ENCODE measurements at regions of chr7 and their contacts with region 1.

Region 1: GRCh38 chr7:105678811-105679495 is 97.7 kb upstream of the EFCAB10 start:
- H3K4me3 Mint-ChIP-seq: peak overlapping the region; percentile 84
- H3K27ac Mint-ChIP-seq: peak overlapping the region; percentile 93
- H3K4me1 Mint-ChIP-seq: peaks cover 88% of the 10 kb centered on the region
- H3K27me3 Mint-ChIP-seq: no peaks in the 10 kb centered on the region

Region 2: GRCh38 chr7:105268511-105269392 is 410.2 kb before region 1 on chr7:
- intact Hi-C with region 1: no loop called
- H3K4me3 Mint-ChIP-seq: peak overlapping the region; percentile 76
- H3K27ac Mint-ChIP-seq: peak overlapping the region; percentile 79
- H3K4me1 Mint-ChIP-seq: peaks cover 21% of the 10 kb centered on the region
- H3K27me3 Mint-ChIP-seq: no peaks in the 10 kb centered on the region

Region 3: DNA sequence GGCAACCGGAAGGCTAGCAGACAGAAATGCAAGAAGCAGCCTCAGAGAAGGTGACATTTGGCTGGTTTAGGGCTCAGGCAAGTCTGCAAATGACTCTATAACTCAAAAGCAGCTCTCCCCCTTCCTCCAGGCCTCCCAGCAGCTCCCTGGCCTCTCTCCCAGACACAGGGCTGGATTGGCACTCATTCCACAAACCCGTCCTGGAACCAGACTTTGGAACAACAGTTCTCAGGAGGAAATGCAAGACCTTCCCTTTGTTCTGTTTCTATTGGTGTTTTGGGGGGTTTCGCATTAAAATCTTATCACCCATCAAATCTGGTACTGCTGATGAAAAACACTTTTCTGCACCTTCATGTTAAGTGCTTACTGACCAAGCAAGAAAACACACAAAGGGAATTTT is 57.3 kb before region 1 on chr7:
- intact Hi-C with region 1: no loop called
- H3K4me3 Mint-ChIP-seq: no peak overlapping the region
- H3K27ac Mint-ChIP-seq: no peak overlapping the region
- H3K4me1 Mint-ChIP-seq: no peaks in the 10 kb centered on the region
- H3K27me3 Mint-ChIP-seq: no peaks in the 10 kb centered on the region

Region 4: DNA sequence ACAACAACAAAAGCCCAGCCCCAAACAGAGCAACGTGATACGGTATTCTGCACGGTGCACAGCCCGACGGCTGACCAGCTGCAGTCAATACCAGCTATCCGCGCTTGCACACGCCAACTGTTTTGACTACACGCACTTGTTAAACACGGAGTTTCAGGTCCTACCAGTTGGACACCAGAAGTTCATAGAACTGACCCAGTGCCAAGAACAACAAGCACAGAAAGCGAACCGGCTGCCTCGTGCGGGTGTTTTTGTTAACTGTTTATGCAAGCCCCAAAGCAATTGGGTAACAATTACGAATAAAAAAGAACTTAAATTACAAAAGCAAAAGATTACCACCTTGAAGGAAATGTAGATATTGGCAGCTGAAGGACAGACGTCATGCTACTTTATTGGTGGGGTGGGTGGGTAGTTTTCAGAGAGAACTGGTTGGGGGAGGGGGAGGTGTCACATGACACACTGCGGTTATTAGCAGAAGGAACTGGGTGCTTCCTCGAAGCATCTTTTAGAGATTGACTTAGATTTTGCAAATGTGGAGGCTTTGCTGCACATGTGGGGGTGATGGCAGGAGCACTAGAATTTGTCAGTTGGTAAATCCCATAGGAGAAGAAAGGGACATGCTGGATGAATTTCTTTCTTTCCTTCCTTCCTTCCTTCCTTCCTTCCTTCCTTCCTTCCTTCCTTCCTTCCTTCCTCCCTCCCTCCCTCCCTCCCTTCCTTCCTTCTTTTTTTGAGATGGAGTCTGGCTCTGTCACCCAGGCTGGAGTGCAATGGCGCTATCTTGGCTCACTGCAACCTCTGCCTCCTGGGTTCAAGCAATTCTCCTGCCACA is 13.0 kb after region 1 on chr7:
- intact Hi-C with region 1: loop called (anchors 1 kb)
- H3K4me3 Mint-ChIP-seq: peak overlapping the region; percentile 87
- H3K27ac Mint-ChIP-seq: peak overlapping the region; percentile 92
- H3K4me1 Mint-ChIP-seq: peaks cover 42% of the 10 kb centered on the region
- H3K27me3 Mint-ChIP-seq: no peaks in the 10 kb centered on the region

Region 5: GRCh38 chr7:105743351-105744090 is 64.6 kb after region 1 on chr7:
- intact Hi-C with region 1: loop called (anchors 2 kb)
- H3K4me3 Mint-ChIP-seq: no peak overlapping the region
- H3K27ac Mint-ChIP-seq: peak overlapping the region; percentile 69
- H3K4me1 Mint-ChIP-seq: peaks cover 24% of the 10 kb centered on the region
- H3K27me3 Mint-ChIP-seq: no peaks in the 10 kb centered on the region

Region 6: DNA sequence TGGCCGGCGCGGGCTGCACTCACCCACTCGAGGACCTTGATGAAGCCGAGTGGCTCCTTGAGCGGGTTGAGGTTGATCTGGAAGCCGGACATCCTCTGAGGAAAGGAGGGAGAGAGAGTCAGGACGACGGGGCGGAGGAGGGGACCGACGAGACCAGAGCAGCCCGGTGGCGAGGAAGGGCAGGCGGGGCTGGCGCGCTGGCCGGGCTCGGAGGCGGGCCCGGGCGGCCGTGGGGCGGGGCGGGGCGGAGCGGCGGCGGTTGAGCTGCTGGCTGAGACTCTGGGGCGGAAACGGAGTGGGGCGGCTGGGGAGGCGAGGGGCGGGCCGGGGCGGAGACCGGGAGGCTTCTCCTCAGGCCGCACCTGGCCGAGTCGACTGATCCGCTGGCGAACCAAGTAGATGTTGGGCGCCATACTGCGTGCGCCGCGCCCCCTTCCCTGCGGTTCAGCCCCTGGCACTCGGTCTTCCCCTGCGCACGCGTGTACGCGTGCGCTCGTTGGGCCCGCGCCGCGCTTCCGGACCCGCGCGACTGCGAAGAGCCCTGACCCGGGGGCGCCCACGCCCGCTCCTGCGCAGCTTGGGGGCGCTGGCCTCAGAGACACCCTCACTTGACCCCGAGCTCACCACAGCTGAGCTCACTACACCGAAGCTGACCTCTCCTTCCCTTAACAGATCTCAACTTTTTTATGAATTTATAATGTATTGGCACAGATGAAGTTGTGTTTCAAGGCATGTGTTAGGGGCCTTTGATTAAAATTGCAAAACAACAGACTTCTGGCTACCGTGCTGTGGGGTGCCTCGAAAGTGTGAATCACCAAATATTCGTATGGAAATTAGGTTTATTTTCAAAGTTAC is 433.4 kb after region 1 on chr7 and contains the start of gene SYPL1:
- intact Hi-C with region 1: loop called (anchors 10 kb)
- H3K4me3 Mint-ChIP-seq: peak within 1 kb of the TSS; percentile 94
- H3K27ac Mint-ChIP-seq: peak within 1 kb of the TSS; percentile 89
- H3K4me1 Mint-ChIP-seq: peaks cover 28% of the 10 kb centered on the region
- H3K27me3 Mint-ChIP-seq: no peaks in the 10 kb centered on the region